Activated B cell treated with CpG ODN at 0.5 μM for 24 hours (primary cell): ENCODE measurements at regions of chr10 and their contacts with region 1.

Region 1: DNA sequence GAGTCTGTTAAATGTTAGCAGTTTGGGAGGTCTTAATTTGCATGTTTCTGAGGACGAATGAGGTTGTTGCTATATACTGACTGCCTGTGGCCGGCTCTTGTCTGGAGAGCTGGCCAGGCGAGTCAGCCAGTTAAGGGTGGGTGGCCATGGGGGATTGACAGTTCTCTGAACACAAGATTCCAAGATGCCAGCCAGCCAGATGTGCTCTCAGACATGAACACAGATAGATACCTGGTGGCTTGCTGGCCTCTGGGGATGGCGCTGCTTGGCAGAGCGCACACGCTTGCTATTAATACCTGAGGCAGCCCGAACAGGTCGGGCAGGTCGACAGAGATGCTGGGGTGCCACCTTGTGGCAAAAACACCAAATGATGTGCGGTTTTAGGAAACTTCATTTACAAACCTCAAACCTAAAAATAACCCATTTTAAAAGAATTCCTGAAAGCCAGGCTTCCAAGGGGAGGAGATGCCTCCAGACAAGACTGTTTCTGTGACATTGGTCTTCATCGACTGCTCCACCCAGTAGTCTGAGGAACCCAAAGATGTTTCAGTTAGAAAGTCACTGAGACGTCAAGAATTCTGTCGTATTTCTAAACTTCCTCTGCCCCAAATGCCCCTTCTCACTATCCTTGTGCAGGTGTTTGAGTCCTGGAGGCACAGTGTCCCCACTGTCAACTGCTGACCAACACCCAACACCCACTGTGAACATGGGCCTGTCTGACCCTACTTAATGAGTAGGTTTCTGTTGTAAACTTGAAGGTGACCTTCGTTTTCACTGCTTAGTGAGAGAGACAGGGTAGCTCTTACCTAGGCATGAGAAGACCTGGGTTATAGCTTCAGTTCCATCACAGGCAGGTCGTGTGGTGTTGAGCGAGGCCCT is 123.4 kb downstream of the NT5C2 start:
- DNase-seq: peak; percentile 40
- ATAC-seq: peak; percentile 82
- H3K4me3 Mint-ChIP-seq: peak overlapping the region; percentile 55
- H3K27ac Mint-ChIP-seq: peak overlapping the region; percentile 73
- H3K4me1 Mint-ChIP-seq: peaks cover 33% of the 10 kb centered on the region
- H3K27me3 Mint-ChIP-seq: no peaks in the 10 kb centered on the region
- CTCF ChIP-seq: no peak

Region 2: GRCh38 chr10:102729029-102730026 is 340.4 kb before region 1 on chr10:
- CTCF ChIA-PET with region 1: no interaction called
- POLR2A ChIA-PET with region 1: interaction called, 3 read pairs
- intact Hi-C with region 1: loop called (anchors 1 kb)
- DNase-seq: peak; percentile 37
- ATAC-seq: peak; percentile 78
- H3K4me3 Mint-ChIP-seq: no peak overlapping the region
- H3K27ac Mint-ChIP-seq: no peak overlapping the region
- H3K4me1 Mint-ChIP-seq: no peaks in the 10 kb centered on the region
- H3K27me3 Mint-ChIP-seq: no peaks in the 10 kb centered on the region
- CTCF ChIP-seq: no peak

Region 3: GRCh38 chr10:102835007-102835482 is 234.6 kb before region 1 on chr10:
- CTCF ChIA-PET with region 1: interaction called, 4 read pairs
- POLR2A ChIA-PET with region 1: no interaction called
- intact Hi-C with region 1: loop called (anchors 1 kb)
- DNase-seq: peak; percentile 57
- ATAC-seq: peak; percentile 95
- H3K4me3 Mint-ChIP-seq: no peak overlapping the region
- H3K27ac Mint-ChIP-seq: no peak overlapping the region
- H3K4me1 Mint-ChIP-seq: peaks cover 2% of the 10 kb centered on the region
- H3K27me3 Mint-ChIP-seq: peaks cover 3% of the 10 kb centered on the region
- CTCF ChIP-seq: peak; percentile 21

Region 4: DNA sequence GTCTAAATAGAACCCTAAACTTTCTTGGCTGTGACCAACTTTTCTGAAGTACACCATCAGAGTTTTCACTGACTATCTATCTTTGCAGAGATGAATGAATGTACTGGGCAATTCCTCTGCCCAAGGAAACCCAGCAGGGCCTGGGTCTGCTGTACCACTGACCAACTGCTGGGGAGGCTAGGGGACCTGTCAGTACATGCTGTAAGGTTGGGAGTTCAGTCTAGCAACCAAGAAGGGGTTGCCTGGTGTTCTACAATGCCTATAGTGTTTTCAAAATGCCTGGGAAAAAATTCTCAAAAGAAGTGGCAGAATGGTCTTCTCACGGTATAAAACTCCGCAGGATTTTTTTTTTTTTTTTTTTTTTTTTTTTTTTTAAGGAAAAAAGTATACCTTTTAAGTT is 17.1 kb after region 1 on chr10:
- CTCF ChIA-PET with region 1: no interaction called
- POLR2A ChIA-PET with region 1: no interaction called
- intact Hi-C with region 1: no loop called
- DNase-seq: no peak
- ATAC-seq: no peak
- H3K4me3 Mint-ChIP-seq: no peak overlapping the region
- H3K27ac Mint-ChIP-seq: no peak overlapping the region
- H3K4me1 Mint-ChIP-seq: no peaks in the 10 kb centered on the region
- H3K27me3 Mint-ChIP-seq: no peaks in the 10 kb centered on the region
- CTCF ChIP-seq: no peak